Ovary (tissue), 10 donors: ENCODE measurements at regions of chr11 and their contacts with region 1.

Region 1: DNA sequence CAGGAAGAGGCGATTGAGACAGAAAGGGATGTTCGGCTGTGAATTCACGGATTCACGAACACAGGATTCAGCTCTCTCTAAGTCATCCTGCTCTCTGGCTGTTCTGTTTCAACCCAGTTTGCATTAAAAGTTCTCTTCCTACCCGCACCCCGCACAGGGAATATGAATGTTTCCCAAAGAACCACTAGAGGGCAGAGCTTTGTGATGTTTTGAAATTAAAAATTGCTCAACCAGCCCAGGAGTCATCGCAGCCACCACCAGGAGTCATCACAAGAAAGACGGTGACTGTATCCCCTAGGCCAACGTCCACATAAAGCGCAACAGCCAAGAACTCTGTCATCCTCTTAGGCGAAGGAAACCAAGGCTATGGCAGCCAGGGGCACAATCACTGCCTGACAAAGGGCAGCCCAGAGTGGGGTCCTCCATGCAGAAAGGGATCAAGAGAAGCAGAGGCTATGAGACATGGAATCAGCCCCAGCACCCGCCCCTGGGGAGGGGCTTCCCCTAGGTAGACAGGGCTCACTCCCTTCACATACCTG is 122.4 kb downstream of the WT1 start:
- DNase-seq: peak; percentile 29 to 69 (median 39)
- H3K4me3 ChIP-seq: no peak overlapping the region
- H3K27ac ChIP-seq: no peak overlapping the region
- H3K4me1 ChIP-seq: peaks cover 3% of the 10 kb centered on the region
- H3K27me3 ChIP-seq: no peaks in the 10 kb centered on the region
- CTCF ChIP-seq: peak in 2 of 3 donors; percentile 67 to 79
- EP300 ChIP-seq: no peak
- POLR2A ChIP-seq: no peak

Region 2: GRCh38 chr11:31968461-31969358 is 344.2 kb before region 1 on chr11:
- intact Hi-C with region 1: no loop called
- DNase-seq: no peak
- H3K4me3 ChIP-seq: no peak overlapping the region
- H3K27ac ChIP-seq: no peak overlapping the region
- H3K4me1 ChIP-seq: no peaks in the 10 kb centered on the region
- H3K27me3 ChIP-seq: no peaks in the 10 kb centered on the region
- CTCF ChIP-seq: no peak
- EP300 ChIP-seq: no peak
- POLR2A ChIP-seq: no peak

Region 3: GRCh38 chr11:32059686-32060462 is 253.1 kb before region 1 on chr11:
- intact Hi-C with region 1: loop called in 1 of 4 experiments (anchors 2 kb)
- DNase-seq: no peak
- H3K4me3 ChIP-seq: no peak overlapping the region
- H3K27ac ChIP-seq: no peak overlapping the region
- H3K4me1 ChIP-seq: no peaks in the 10 kb centered on the region
- H3K27me3 ChIP-seq: no peaks in the 10 kb centered on the region
- CTCF ChIP-seq: no peak
- EP300 ChIP-seq: no peak
- POLR2A ChIP-seq: no peak

Region 4: GRCh38 chr11:32358729-32359128 is 45.8 kb after region 1 on chr11:
- intact Hi-C with region 1: no loop called
- DNase-seq: peak; percentile 30 to 70 (median 47)
- H3K4me3 ChIP-seq: no peak overlapping the region
- H3K27ac ChIP-seq: no peak overlapping the region
- H3K4me1 ChIP-seq: peaks cover 3% of the 10 kb centered on the region
- H3K27me3 ChIP-seq: no peaks in the 10 kb centered on the region
- CTCF ChIP-seq: no peak
- EP300 ChIP-seq: no peak
- POLR2A ChIP-seq: no peak

Region 5: GRCh38 chr11:32400196-32400595 is 87.3 kb after region 1 on chr11:
- intact Hi-C with region 1: no loop called
- DNase-seq: no peak
- H3K4me3 ChIP-seq: no peak overlapping the region
- H3K27ac ChIP-seq: no peak overlapping the region
- H3K4me1 ChIP-seq: no peaks in the 10 kb centered on the region
- H3K27me3 ChIP-seq: no peaks in the 10 kb centered on the region
- CTCF ChIP-seq: no peak
- EP300 ChIP-seq: no peak
- POLR2A ChIP-seq: no peak

Region 6: GRCh38 chr11:32792948-32793475 is 480.1 kb after region 1 on chr11:
- intact Hi-C with region 1: loop called in 1 of 4 experiments (anchors 10 kb)
- DNase-seq: peak; percentile 18 to 66 (median 57)
- H3K4me3 ChIP-seq: no peak overlapping the region
- H3K27ac ChIP-seq: no peak overlapping the region
- H3K4me1 ChIP-seq: no peaks in the 10 kb centered on the region
- H3K27me3 ChIP-seq: no peaks in the 10 kb centered on the region
- CTCF ChIP-seq: peak; percentile 24 to 65 (median 58)
- EP300 ChIP-seq: no peak
- POLR2A ChIP-seq: no peak